ENCODE measurements at regions of chr6 and their contacts with region 1.

Region 1: GRCh38 chr6:114108119-114109002 is 137.4 kb upstream of the HDAC2 start:
- DNase-seq: peak; percentile 71
- H3K4me3 ChIP-seq: no peak overlapping the region
- H3K27ac ChIP-seq: no peak overlapping the region
- H3K4me1 ChIP-seq: no peaks in the 10 kb centered on the region
- H3K27me3 ChIP-seq: peaks cover 8 to 15% of the 10 kb centered on the region in 2 experiments
- CTCF ChIP-seq: peak; percentile 68 to 71
- POLR2A ChIP-seq: no peak

Region 2: DNA sequence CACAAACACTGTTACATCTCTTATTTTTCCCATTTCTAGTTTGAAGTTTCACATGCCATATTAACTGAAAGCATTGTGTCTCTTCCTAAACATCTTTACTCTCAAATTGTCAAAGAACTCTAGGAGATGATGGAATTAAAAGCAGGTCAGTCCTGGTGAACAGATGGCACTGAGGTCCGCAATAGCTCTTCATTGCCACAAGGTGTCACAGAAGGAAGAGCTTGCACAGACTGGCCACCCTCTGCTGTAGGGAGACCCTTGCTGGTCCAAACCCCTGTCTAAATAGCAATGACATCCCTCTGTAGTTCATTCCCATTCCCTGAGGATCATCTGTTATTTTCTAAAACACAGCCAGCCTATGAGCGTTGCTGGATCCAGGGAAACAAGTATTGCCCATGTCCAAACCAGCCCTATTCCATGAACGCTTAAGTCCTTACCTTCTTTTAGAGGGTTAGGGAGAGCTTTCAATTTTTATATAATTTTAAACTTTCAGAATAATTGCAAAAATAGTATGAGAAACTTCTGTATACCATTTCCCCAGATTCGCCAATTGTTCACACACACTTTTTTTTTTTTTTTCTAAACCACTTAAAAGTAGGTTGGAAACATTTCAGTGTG is 127.3 kb before region 1 on chr6:
- CTCF ChIA-PET with region 1: interaction called, 93 read pairs
- POLR2A ChIA-PET with region 1: no interaction called
- dilution Hi-C with region 1: no loop called
- intact Hi-C with region 1: loop called (anchors 1 kb)
- DNase-seq: peak; percentile 35
- H3K4me3 ChIP-seq: no peak overlapping the region
- H3K27ac ChIP-seq: no peak overlapping the region
- H3K4me1 ChIP-seq: no peaks in the 10 kb centered on the region
- H3K27me3 ChIP-seq: no peaks in the 10 kb centered on the region
- CTCF ChIP-seq: peak; percentile 59 to 71
- POLR2A ChIP-seq: no peak

Region 3: DNA sequence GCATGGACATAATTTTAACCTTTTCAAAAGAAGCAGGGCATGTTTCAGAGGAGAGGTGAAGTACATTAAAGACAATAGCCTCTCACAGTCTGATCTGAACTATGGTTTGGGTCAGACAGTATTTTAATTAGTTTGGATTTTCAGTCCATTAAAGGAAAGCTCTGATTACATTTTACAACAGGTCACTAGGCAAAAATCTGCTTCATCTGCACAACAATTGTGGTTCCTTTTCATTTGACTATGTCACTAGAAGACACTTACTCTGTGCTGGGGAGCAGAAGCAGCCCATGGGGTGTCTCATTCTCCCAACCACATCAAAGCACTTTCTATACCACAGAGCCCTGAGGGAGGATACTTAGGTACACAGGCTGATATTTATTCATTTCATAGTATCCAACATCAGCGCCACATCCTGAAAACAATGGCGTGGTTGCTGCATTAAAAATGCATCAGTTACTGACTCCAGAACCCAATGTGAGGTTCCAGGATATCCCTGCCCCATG is 100.9 kb before region 1 on chr6:
- CTCF ChIA-PET with region 1: interaction called, 14 read pairs
- POLR2A ChIA-PET with region 1: no interaction called
- dilution Hi-C with region 1: no loop called
- intact Hi-C with region 1: no loop called
- DNase-seq: no peak
- H3K4me3 ChIP-seq: no peak overlapping the region
- H3K27ac ChIP-seq: peak overlapping the region; percentile 45
- H3K4me1 ChIP-seq: peaks cover 19% of the 10 kb centered on the region
- H3K27me3 ChIP-seq: no peaks in the 10 kb centered on the region
- CTCF ChIP-seq: no peak
- POLR2A ChIP-seq: no peak

Region 4: DNA sequence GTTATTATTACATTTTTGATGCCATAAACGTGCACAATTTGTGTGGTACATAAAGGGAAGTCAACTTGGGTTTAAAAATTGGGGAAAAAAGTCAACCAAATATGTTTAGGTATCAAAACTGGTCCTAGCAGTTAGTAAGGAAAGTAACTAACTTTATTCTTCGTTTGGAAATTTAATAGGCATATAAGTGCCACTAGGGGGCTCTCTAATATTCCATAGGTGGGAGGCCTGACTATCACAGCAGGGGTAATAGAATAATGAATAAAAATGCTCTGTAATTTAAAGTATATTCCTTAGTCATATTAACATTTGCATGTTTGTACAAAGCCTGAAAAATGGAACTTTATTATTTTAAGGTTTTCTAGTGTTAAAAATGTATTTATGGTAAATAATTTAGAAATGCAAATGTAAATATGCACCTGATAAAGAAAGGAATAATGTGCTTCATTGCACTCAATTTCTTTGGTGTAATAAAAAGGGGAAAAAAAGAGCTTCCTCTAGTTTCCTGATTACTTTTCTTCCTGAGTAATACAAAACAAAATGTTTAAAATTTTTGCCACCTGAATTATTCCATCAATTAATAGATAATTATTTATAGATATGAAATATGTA is 11.7 kb before region 1 on chr6:
- CTCF ChIA-PET with region 1: interaction called, 29 read pairs
- POLR2A ChIA-PET with region 1: no interaction called
- dilution Hi-C with region 1: no loop called
- intact Hi-C with region 1: loop called (anchors 1 kb)
- DNase-seq: peak; percentile 30
- H3K4me3 ChIP-seq: no peak overlapping the region
- H3K27ac ChIP-seq: no peak overlapping the region
- H3K4me1 ChIP-seq: peaks cover 3% of the 10 kb centered on the region
- H3K27me3 ChIP-seq: peaks cover 6% of the 10 kb centered on the region in 2 experiments
- CTCF ChIP-seq: peak; percentile 55 to 56
- POLR2A ChIP-seq: no peak

Region 5: DNA sequence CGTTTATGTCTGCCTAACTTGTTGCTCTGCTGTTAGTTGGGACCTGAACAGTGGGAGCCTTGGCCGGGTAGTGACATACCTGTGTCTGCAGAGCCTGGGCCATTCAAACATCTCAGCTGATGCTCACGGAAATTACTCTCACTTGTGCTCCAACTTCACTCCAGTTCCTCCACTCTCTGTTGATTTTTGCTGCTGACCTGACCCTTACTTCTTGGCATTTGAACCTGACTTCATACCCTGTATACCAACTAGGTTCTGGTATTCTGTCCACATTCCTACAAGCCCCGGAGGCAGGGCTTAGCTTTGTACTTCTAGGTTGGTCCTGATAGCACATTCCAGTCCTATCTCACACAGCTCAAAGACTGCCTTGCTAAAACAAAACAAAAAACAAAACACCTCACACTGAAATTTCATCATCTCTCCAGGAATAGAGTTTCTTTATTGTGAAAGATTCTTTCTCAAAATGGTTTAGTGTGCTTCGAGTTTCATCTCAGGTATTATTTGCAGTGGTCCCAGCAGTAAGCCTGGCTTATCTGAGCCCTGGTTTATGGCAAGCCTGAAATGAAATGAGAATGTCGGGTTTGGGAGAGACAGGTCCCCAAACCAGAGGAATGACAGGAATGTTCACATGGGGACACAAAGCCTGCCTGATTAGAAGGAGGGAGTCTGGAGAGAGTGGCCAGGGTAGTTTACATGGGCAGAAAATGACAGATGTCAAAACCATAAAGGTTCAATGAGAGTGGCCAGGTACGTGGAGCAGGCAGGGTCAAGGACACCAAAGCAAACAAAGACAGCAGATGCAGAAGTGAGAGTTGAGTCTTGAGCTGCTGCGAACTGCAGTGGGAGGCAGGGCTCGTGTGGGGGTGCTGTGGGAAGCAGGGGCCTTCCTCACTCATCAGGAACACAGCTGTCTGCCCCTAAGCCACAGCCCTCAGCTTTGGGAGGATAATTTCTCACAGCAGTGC is 36.8 kb after region 1 on chr6:
- CTCF ChIA-PET with region 1: interaction called, 3 read pairs
- POLR2A ChIA-PET with region 1: interaction called, 10 read pairs
- dilution Hi-C with region 1: no loop called
- intact Hi-C with region 1: no loop called
- DNase-seq: no peak
- H3K4me3 ChIP-seq: no peak overlapping the region
- H3K27ac ChIP-seq: no peak overlapping the region
- H3K4me1 ChIP-seq: no peaks in the 10 kb centered on the region
- H3K27me3 ChIP-seq: no peaks in the 10 kb centered on the region
- CTCF ChIP-seq: no peak
- POLR2A ChIP-seq: no peak

Region 6: GRCh38 chr6:114157848-114158247 is 49.5 kb after region 1 on chr6:
- CTCF ChIA-PET with region 1: no interaction called
- POLR2A ChIA-PET with region 1: no interaction called
- dilution Hi-C with region 1: no loop called
- intact Hi-C with region 1: no loop called
- DNase-seq: no peak
- H3K4me3 ChIP-seq: no peak overlapping the region
- H3K27ac ChIP-seq: no peak overlapping the region
- H3K4me1 ChIP-seq: no peaks in the 10 kb centered on the region
- H3K27me3 ChIP-seq: peaks cover 0 to 2% of the 10 kb centered on the region in 2 experiments
- CTCF ChIP-seq: no peak
- POLR2A ChIP-seq: no peak

Region 7: GRCh38 chr6:114304304-114304887 is 196.0 kb after region 1 on chr6:
- CTCF ChIA-PET with region 1: interaction called, 39 read pairs
- POLR2A ChIA-PET with region 1: no interaction called
- dilution Hi-C with region 1: no loop called
- intact Hi-C with region 1: loop called (anchors 1 kb)
- DNase-seq: peak; percentile 19
- H3K4me3 ChIP-seq: no peak overlapping the region
- H3K27ac ChIP-seq: no peak overlapping the region
- H3K4me1 ChIP-seq: no peaks in the 10 kb centered on the region
- H3K27me3 ChIP-seq: no peaks in the 10 kb centered on the region
- CTCF ChIP-seq: peak; percentile 20 to 29
- POLR2A ChIP-seq: no peak

Region 8: GRCh38 chr6:115896538-115897129 is 1788.3 kb after region 1 on chr6:
- CTCF ChIA-PET with region 1: interaction called, 5 read pairs
- POLR2A ChIA-PET with region 1: no interaction called
- dilution Hi-C with region 1: no loop called
- intact Hi-C with region 1: loop called (anchors 5 kb)
- DNase-seq: peak; percentile 37
- H3K4me3 ChIP-seq: no peak overlapping the region
- H3K27ac ChIP-seq: no peak overlapping the region
- H3K4me1 ChIP-seq: no peaks in the 10 kb centered on the region
- H3K27me3 ChIP-seq: no peaks in the 10 kb centered on the region
- CTCF ChIP-seq: peak; percentile 47 to 55
- POLR2A ChIP-seq: no peak